Activated CD4-positive, alpha-beta memory T cell treated with anti-CD3 and anti-CD28 coated beads for 36 hours (primary cell): ENCODE measurements at regions of chr7 and their contacts with region 1.

Region 1: GRCh38 chr7:128031901-128032604 is 816 bp upstream of the LRRC4 start:
- DNase-seq: peak; percentile 76
- H3K4me3 Mint-ChIP-seq: peak overlapping the region; percentile 72
- H3K27ac Mint-ChIP-seq: no peak overlapping the region
- H3K4me1 Mint-ChIP-seq: peaks cover 17% of the 10 kb centered on the region
- H3K27me3 Mint-ChIP-seq: no peaks in the 10 kb centered on the region

Region 2: DNA sequence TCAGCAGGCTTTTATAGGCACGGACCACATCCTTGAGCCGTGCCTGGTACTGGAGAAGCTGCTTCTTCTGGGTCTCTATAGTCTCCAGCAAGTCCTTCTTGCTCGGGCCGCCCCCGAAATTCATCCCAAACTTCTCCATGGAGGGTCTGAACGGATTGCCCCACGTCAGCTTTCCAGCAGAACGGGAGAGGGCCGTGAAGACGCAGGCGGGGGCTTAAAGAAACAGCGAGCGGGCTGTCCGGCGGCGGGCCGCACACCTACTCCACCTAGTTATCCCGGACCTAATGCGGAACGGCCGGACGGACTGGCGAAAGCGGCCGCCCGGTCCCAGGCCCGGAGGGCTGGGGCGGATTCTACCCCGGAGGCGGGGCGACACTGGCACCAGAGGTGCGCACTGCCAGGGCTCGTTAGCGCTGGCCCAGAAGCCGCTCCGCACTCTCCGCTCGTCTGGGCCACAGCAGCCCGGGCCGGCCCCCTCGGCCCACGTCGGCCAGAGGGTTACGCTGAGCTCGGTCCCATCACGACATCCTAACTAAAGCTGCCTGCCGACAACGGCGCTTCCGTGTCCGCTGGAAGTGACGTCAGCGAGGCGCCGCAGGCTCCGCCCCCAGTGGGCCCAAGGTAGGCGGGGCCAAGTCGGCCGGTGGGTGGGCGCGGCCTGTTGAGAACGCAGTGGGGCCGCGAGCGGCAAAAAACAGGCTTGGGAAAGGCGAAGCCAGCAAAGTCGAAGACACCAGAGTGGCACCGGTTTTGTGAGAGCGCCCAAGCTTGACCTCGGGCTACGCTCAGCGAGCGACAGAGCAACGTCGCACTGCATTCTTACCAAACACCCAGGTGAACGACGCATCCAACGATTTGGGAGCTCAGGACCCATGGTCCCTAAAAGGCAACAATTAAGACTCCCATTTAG is 446.8 kb before region 1 on chr7 and contains the start of gene GCC1:
- CTCF ChIA-PET with region 1: no interaction called
- POLR2A ChIA-PET with region 1: no interaction called
- intact Hi-C with region 1: loop called (anchors 1 kb)
- DNase-seq: peak; percentile 96
- H3K4me3 Mint-ChIP-seq: peak within 1 kb of the TSS; percentile 88
- H3K27ac Mint-ChIP-seq: peak within 1 kb of the TSS; percentile 64
- H3K4me1 Mint-ChIP-seq: peaks cover 69% of the 10 kb centered on the region
- H3K27me3 Mint-ChIP-seq: no peaks in the 10 kb centered on the region
- total RNA-seq, gene GCC1: 14.1 to 15.0 TPM

Region 3: DNA sequence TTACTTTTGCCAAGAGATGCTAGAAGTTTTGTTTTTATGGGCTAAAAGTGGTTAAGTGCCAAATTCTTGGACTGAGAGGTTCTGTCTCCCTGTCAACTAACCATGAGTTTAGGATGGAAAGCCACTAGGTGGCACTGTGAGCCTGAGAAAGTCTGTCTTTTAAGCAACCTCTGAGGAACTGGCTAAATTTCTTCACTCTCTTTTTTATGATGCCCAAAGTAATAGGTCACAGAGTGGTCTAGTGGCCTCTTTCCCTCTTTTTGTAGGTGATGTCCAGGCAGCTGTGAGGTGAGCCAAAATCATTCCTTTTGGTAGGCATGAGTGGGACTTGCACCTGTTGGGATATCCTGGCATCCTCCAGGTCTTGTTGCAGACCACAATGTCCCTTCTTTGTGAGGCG is 323.3 kb before region 1 on chr7:
- CTCF ChIA-PET with region 1: no interaction called
- POLR2A ChIA-PET with region 1: no interaction called
- intact Hi-C with region 1: loop called (anchors 10 kb)
- DNase-seq: peak; percentile 74
- H3K4me3 Mint-ChIP-seq: no peak overlapping the region
- H3K27ac Mint-ChIP-seq: no peak overlapping the region
- H3K4me1 Mint-ChIP-seq: peaks cover 5% of the 10 kb centered on the region
- H3K27me3 Mint-ChIP-seq: no peaks in the 10 kb centered on the region

Region 4: DNA sequence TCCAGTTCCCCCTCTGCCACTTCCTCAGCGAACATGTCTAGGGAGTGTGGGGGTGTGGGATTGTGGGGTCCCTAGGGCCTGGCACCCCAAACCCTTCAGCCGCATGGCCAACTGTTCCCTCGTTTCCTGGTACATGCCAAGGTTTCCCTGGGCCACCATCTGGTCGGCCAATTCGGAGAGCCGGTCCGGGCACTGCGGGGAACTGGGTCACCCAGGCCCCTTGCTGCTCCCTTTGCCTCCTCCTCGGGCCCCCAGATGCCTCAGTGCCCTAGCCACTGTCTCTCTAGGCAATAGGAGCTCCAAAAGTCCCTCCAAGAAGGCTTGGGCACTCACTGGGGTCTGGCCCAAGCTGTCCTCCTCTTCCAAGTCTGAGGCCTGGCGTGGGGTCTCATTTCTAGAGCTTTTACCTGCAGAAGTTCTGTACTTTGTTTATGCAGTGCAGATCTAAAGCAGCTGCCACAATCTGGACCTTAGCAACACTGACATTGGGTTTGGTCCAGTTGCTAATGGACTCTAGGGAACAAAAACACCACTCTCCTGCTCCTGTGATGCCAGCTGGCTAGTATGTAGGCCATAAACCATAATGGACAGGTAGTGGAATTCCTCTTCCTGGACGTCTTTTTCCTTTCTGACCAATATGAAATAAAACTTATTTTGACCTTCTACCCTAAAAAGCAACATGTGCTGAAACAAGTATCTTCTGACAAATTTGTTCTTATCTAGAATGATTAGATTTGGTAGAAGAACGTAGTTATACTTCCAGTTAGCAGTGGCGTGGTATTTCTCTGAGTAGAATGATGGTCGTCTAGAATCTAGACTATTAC is 173.8 kb before region 1 on chr7:
- CTCF ChIA-PET with region 1: no interaction called
- POLR2A ChIA-PET with region 1: no interaction called
- intact Hi-C with region 1: loop called (anchors 5 kb)
- DNase-seq: no peak
- H3K4me3 Mint-ChIP-seq: no peak overlapping the region
- H3K27ac Mint-ChIP-seq: peak overlapping the region; percentile 23
- H3K4me1 Mint-ChIP-seq: peaks cover 60% of the 10 kb centered on the region
- H3K27me3 Mint-ChIP-seq: no peaks in the 10 kb centered on the region

Region 5: GRCh38 chr7:128045766-128046165 is 13.7 kb after region 1 on chr7:
- CTCF ChIA-PET with region 1: no interaction called
- POLR2A ChIA-PET with region 1: no interaction called
- intact Hi-C with region 1: no loop called
- DNase-seq: no peak
- H3K4me3 Mint-ChIP-seq: no peak overlapping the region
- H3K27ac Mint-ChIP-seq: peak overlapping the region; percentile 7
- H3K4me1 Mint-ChIP-seq: peaks cover 15% of the 10 kb centered on the region
- H3K27me3 Mint-ChIP-seq: no peaks in the 10 kb centered on the region